A673 (cell line): ENCODE measurements at regions of chr16 and their contacts with region 1.

Region 1: GRCh38 chr16:21656795-21657768 is 4.7 kb upstream of the IGSF6 start:
- DNase-seq: peak; percentile 72
- H3K4me3 ChIP-seq: no peak overlapping the region
- H3K27ac ChIP-seq: no peak overlapping the region
- H3K4me1 ChIP-seq: no peaks in the 10 kb centered on the region
- H3K27me3 ChIP-seq: no peaks in the 10 kb centered on the region
- CTCF ChIP-seq: peak; percentile 88

Region 2: GRCh38 chr16:21501909-21502667 is 155.0 kb before region 1 on chr16:
- CTCF ChIA-PET with region 1: no interaction called
- POLR2A ChIA-PET with region 1: no interaction called
- intact Hi-C with region 1: no loop called
- DNase-seq: peak; percentile 95
- H3K4me3 ChIP-seq: peak overlapping the region; percentile 64
- H3K27ac ChIP-seq: peak overlapping the region; percentile 85
- H3K4me1 ChIP-seq: no peaks in the 10 kb centered on the region
- H3K27me3 ChIP-seq: no peaks in the 10 kb centered on the region
- CTCF ChIP-seq: no peak

Region 3: GRCh38 chr16:21708533-21709115 is 51.5 kb after region 1 on chr16:
- CTCF ChIA-PET with region 1: interaction called, 4 read pairs
- POLR2A ChIA-PET with region 1: no interaction called
- intact Hi-C with region 1: loop called (anchors 1 kb)
- DNase-seq: peak; percentile 75
- H3K4me3 ChIP-seq: no peak overlapping the region
- H3K27ac ChIP-seq: no peak overlapping the region
- H3K4me1 ChIP-seq: no peaks in the 10 kb centered on the region
- H3K27me3 ChIP-seq: no peaks in the 10 kb centered on the region
- CTCF ChIP-seq: peak; percentile 89

Region 4: DNA sequence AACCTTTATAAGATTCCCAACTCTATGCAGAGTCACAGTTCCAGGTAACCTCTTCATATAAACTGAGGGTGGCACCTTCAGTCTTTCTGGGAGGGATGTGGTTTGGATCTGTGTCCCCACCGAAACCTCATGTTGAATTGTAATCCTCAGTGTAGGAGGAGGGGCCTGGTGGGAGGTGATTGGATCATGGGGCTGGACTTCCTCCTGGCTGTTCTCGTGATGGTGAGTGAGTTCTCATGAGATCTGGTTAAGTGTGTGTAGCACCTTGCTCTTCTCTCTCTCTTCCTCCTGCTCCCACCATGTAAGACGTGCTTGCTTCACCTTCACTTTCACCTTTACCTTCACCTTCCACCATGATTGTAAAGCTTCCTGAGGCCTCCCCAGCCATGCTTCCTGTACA is 1187.3 kb after region 1 on chr16:
- CTCF ChIA-PET with region 1: interaction called, 10 read pairs
- POLR2A ChIA-PET with region 1: no interaction called
- intact Hi-C with region 1: no loop called
- DNase-seq: no peak
- H3K4me3 ChIP-seq: no peak overlapping the region
- H3K27ac ChIP-seq: no peak overlapping the region
- H3K4me1 ChIP-seq: no peaks in the 10 kb centered on the region
- H3K27me3 ChIP-seq: peaks cover 25% of the 10 kb centered on the region
- CTCF ChIP-seq: no peak